ENCODE measurements at regions of chr15 and their contacts with region 1.

Region 1: GRCh38 chr15:57541805-57542504 is 49.7 kb upstream of the MYZAP start:
- DNase-seq: no peak
- ATAC-seq: no peak
- H3K4me3 Mint-ChIP-seq: no peak overlapping the region
- H3K27ac Mint-ChIP-seq: no peak overlapping the region
- H3K4me1 Mint-ChIP-seq: no peaks in the 10 kb centered on the region
- H3K27me3 Mint-ChIP-seq: peaks cover 6% of the 10 kb centered on the region
- CTCF ChIP-seq: no peak

Region 2: DNA sequence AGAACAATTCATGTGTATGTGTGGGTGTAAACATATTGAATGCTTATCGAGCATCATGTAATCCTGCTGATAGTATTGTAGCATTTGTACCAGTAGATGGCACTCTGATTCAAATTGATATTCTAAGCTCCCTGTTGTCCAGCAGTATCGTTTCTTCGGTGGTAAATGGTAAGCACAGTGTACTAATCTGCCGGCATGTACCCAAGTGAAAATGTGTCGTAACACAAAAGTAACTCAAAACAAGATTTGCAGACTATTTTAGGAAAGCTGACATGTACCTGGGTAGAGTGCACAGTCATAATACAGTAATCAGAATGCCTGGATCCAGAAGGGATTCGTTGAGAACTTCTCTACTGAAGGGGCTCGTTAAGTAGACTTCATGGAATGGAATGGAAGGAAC is 1045.3 kb before region 1 on chr15:
- CTCF ChIA-PET with region 1: interaction called, 5 read pairs
- POLR2A ChIA-PET with region 1: no interaction called
- intact Hi-C with region 1: loop called (anchors 5 kb)
- DNase-seq: no peak
- ATAC-seq: peak; percentile 81
- H3K4me3 Mint-ChIP-seq: peak overlapping the region; percentile 20
- H3K27ac Mint-ChIP-seq: no peak overlapping the region
- H3K4me1 Mint-ChIP-seq: peaks cover 4% of the 10 kb centered on the region
- H3K27me3 Mint-ChIP-seq: no peaks in the 10 kb centered on the region
- CTCF ChIP-seq: no peak

Region 3: DNA sequence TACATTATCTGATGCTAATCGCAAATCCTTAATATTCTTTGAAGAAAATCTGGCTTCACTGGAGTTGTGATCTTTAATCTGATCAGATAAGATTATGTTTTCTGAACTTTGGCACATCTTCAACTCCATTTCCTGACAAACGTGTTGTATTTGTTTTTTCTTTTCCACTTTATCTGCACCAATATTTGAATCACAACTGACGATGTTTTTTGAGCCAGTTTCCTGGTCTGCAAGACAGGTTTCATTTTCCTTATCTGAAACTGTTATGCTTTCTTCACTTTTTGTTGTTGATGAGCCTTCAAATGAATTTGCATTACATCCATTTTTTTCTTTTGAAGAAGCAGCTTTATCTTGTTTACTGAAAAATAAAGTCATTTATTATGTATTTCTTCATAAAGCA is 910.2 kb before region 1 on chr15:
- CTCF ChIA-PET with region 1: no interaction called
- POLR2A ChIA-PET with region 1: no interaction called
- intact Hi-C with region 1: no loop called
- DNase-seq: no peak
- ATAC-seq: no peak
- H3K4me3 Mint-ChIP-seq: no peak overlapping the region
- H3K27ac Mint-ChIP-seq: no peak overlapping the region
- H3K4me1 Mint-ChIP-seq: no peaks in the 10 kb centered on the region
- H3K27me3 Mint-ChIP-seq: no peaks in the 10 kb centered on the region
- CTCF ChIP-seq: no peak

Region 4: DNA sequence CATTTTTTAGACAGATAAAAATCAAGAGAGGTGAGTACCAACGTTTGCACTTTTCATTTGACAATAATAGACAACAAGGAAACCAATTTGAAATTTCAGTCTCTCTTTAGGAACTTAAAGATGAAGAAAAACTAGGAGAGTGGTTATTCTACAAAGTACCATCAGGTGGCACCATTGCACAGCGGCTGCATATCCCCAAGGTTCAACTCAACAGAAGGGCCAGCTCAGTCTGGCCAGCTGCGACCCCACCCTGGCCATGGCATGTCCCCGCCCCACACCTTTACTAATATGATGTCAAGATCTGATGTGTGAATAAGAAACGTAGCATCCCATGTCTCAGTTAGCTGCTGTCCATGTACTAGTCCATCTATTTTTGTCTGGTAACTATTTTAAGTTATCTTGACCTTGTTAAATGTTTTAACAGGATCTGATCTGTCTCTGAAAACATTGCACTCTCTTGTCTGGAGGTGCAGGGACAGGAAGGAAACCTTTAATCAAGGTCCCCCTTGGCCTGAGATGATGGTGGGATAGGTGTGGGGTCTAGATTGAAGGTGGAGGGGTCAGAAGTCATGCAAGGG is 201.2 kb before region 1 on chr15:
- CTCF ChIA-PET with region 1: interaction called, 20 read pairs
- POLR2A ChIA-PET with region 1: no interaction called
- intact Hi-C with region 1: loop called (anchors 1 kb)
- DNase-seq: no peak
- ATAC-seq: peak; percentile 58
- H3K4me3 Mint-ChIP-seq: no peak overlapping the region
- H3K27ac Mint-ChIP-seq: no peak overlapping the region
- H3K4me1 Mint-ChIP-seq: peaks cover 2% of the 10 kb centered on the region
- H3K27me3 Mint-ChIP-seq: peaks cover 9% of the 10 kb centered on the region
- CTCF ChIP-seq: peak; percentile 79